Activated CD4-positive, alpha-beta memory T cell treated with anti-CD3 and anti-CD28 coated beads, Interleukin-2, amount 10 ng/mL, durations not matched to agents 7 days and 5 days (primary cell): ENCODE measurements at regions of chr12 and their contacts with region 1.

Region 1: DNA sequence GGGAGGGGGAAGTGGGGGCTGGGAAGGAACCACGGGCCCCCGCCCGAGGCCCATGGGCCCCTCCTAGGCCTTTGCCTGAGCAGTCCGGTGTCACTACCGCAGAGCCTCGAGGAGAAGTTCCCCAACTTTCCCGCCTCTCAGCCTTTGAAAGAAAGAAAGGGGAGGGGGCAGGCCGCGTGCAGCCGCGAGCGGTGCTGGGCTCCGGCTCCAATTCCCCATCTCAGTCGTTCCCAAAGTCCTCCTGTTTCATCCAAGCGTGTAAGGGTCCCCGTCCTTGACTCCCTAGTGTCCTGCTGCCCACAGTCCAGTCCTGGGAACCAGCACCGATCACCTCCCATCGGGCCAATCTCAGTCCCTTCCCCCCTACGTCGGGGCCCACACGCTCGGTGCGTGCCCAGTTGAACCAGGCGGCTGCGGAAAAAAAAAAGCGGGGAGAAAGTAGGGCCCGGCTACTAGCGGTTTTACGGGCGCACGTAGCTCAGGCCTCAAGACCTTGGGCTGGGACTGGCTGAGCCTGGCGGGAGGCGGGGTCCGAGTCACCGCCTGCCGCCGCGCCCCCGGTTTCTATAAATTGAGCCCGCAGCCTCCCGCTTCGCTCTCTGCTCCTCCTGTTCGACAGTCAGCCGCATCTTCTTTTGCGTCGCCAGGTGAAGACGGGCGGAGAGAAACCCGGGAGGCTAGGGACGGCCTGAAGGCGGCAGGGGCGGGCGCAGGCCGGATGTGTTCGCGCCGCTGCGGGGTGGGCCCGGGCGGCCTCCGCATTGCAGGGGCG is at the start of gene GAPDH:
- DNase-seq: peak; percentile 93
- H3K4me3 Mint-ChIP-seq: peak within 1 kb of the TSS; percentile 96
- H3K27ac Mint-ChIP-seq: peak within 1 kb of the TSS; percentile 97
- H3K4me1 Mint-ChIP-seq: peaks cover 53% of the 10 kb centered on the region
- H3K27me3 Mint-ChIP-seq: no peaks in the 10 kb centered on the region
- total RNA-seq, gene GAPDH: 5,691 to 5,753 TPM

Region 2: GRCh38 chr12:6423267-6424007 is 110.7 kb before region 1 on chr12:
- CTCF ChIA-PET with region 1: interaction called, 45 read pairs
- POLR2A ChIA-PET with region 1: interaction called, 39 read pairs
- DNase-seq: peak; percentile 85
- H3K4me3 Mint-ChIP-seq: no peak overlapping the region
- H3K27ac Mint-ChIP-seq: peak overlapping the region; percentile 54
- H3K4me1 Mint-ChIP-seq: peaks cover 45% of the 10 kb centered on the region
- H3K27me3 Mint-ChIP-seq: no peaks in the 10 kb centered on the region

Region 3: DNA sequence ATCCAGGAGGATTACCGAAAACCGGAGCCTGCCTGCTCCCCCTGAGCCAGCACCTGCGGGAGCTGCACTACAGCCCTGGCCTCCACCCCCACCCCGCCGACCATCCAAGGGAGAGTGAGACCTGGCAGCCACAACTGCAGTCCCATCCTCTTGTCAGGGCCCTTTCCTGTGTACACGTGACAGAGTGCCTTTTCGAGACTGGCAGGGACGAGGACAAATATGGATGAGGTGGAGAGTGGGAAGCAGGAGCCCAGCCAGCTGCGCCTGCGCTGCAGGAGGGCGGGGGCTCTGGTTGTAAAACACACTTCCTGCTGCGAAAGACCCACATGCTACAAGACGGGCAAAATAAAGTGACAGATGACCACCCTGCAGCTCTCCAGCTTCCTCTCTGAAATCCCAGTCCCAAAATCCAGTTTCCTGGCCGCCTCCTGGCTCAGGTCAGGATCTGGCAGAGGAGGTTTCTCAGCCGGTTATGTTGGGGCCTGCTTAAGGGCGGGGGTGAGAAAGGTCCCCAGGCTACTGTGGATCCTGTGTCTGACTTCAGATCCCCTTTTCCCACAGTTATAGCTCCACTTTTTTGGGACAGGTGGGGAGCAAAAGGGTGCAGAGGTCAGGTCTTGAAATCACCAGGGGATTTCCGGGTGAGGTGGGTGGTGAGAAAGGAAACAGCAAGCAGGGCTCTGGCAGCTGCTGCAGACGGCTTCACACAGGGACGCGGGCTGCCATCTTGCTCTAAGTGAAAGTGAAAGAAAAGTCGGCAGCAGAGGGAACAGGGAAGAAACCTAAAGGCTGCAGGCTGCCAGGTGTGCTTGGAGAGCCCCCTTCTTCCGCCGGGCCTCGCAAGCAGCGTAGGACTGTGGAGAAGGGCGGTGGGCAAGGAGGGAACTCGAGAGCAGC is 82.5 kb before region 1 on chr12 and contains the start of gene TAPBPL:
- CTCF ChIA-PET with region 1: interaction called, 7 read pairs
- POLR2A ChIA-PET with region 1: interaction called, 77 read pairs
- DNase-seq: peak; percentile 83
- H3K4me3 Mint-ChIP-seq: peak within 1 kb of the TSS; percentile 99
- H3K27ac Mint-ChIP-seq: peak within 1 kb of the TSS; percentile 97
- H3K4me1 Mint-ChIP-seq: peaks cover 71% of the 10 kb centered on the region
- H3K27me3 Mint-ChIP-seq: no peaks in the 10 kb centered on the region
- total RNA-seq, gene TAPBPL: 45.0 to 49.0 TPM

Region 4: GRCh38 chr12:6470375-6471163 is 63.5 kb before region 1 on chr12 and contains the start of gene VAMP1:
- CTCF ChIA-PET with region 1: interaction called, 11 read pairs
- POLR2A ChIA-PET with region 1: interaction called, 88 read pairs
- DNase-seq: peak; percentile 99
- H3K4me3 Mint-ChIP-seq: peak within 1 kb of the TSS; percentile 89
- H3K27ac Mint-ChIP-seq: peak within 1 kb of the TSS; percentile 88
- H3K4me1 Mint-ChIP-seq: peaks cover 52% of the 10 kb centered on the region
- H3K27me3 Mint-ChIP-seq: peaks cover 8% of the 10 kb centered on the region
- total RNA-seq, gene VAMP1: 45.1 to 50.9 TPM

Region 5: GRCh38 chr12:6554168-6555017 is 20.3 kb after region 1 on chr12:
- CTCF ChIA-PET with region 1: interaction called, 115 read pairs
- POLR2A ChIA-PET with region 1: interaction called, 201 read pairs
- DNase-seq: peak; percentile 80
- H3K4me3 Mint-ChIP-seq: peak overlapping the region; percentile 86
- H3K27ac Mint-ChIP-seq: peak overlapping the region; percentile 66
- H3K4me1 Mint-ChIP-seq: peaks cover 55% of the 10 kb centered on the region
- H3K27me3 Mint-ChIP-seq: no peaks in the 10 kb centered on the region

Region 6: DNA sequence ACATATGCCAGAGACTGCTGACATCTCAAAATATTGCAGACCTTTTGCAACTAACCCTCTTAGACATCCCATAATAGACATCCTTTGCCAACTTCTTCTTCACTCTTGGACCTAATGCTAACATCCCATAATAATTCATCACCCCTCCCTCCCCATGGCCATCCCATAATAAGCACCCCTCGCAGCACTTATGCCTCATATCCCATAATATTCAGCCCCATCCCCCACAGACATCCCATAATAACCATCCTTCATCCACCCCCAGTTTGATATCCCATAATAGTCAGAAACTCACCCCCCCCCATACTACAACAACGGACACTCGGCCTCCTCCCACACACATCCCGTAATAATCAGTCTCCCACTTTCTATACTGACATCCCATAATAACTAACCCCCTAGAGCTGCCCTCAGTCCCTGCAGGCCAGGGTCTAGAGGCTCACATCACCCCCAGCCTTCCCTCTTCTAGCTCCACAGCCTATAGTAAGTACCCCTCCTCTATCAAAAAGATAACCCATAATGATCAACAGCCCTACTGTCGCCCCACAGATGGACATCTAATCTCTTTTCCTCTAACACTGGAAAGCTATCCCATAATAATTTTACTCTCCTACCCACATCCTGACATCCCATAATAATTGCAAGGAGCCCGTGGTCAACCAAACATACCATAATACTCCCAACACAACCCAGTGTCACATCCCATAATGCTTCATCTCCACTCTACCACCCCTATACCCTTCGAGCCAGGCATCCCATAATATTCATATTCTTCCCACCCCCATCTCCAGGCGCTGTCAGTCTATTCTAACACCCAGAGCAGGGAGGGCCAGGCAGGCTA is 73.9 kb after region 1 on chr12:
- CTCF ChIA-PET with region 1: interaction called, 4 read pairs
- POLR2A ChIA-PET with region 1: interaction called, 13 read pairs
- DNase-seq: peak; percentile 72
- H3K4me3 Mint-ChIP-seq: no peak overlapping the region
- H3K27ac Mint-ChIP-seq: no peak overlapping the region
- H3K4me1 Mint-ChIP-seq: peaks cover 53% of the 10 kb centered on the region
- H3K27me3 Mint-ChIP-seq: no peaks in the 10 kb centered on the region

Region 7: DNA sequence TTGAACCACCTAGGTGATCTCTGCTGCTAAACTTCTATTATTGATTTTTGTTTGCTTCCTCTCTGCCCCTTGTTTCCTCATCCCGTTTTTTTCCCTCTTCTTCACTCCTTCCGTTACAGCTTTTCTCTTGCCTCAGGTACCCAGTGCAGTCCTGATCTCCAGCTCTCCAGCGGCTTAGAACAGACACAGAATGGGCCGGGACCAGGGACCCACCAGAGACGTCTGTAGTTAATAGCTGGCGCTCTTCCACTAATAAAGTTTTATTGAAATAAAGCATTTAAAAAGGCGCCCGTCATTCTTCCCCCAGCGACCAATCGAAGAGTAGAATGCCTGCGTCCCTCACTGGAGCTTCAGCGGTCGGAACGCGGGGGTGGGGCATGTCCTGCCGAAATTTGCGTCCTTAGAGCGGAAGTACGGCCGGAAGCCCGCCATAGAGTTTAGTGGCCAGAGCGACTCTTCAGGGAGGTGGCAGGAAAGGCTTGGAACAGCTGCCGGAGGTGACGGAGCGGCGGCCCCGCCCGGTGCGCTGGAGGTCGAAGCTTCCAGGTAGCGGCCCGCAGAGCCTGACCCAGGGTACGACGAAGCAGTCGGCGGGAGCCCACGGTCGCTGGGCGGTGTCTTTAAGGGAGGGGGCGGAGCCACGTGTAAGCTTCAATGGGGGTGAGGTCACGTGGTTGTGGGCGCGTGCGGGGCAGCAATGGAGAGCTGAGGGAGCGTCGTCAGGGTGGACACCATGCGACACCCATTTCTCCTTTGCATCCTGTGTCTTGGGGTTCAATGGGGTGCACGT is 189.7 kb after region 1 on chr12 and contains the start of gene COPS7A:
- CTCF ChIA-PET with region 1: interaction called, 3 read pairs
- POLR2A ChIA-PET with region 1: interaction called, 10 read pairs
- DNase-seq: peak; percentile 99
- H3K4me3 Mint-ChIP-seq: peak within 1 kb of the TSS; percentile 84
- H3K27ac Mint-ChIP-seq: peak within 1 kb of the TSS; percentile 92
- H3K4me1 Mint-ChIP-seq: peaks cover 22% of the 10 kb centered on the region
- H3K27me3 Mint-ChIP-seq: no peaks in the 10 kb centered on the region
- total RNA-seq, gene COPS7A: 28.4 to 29.0 TPM

Region 8: GRCh38 chr12:7005311-7005710 is 471.2 kb after region 1 on chr12:
- CTCF ChIA-PET with region 1: no interaction called
- POLR2A ChIA-PET with region 1: no interaction called
- DNase-seq: no peak
- H3K4me3 Mint-ChIP-seq: no peak overlapping the region
- H3K27ac Mint-ChIP-seq: no peak overlapping the region
- H3K4me1 Mint-ChIP-seq: peaks cover 14% of the 10 kb centered on the region
- H3K27me3 Mint-ChIP-seq: no peaks in the 10 kb centered on the region